ENCODE measurements at regions of chr1 and their contacts with region 1.

Region 1: DNA sequence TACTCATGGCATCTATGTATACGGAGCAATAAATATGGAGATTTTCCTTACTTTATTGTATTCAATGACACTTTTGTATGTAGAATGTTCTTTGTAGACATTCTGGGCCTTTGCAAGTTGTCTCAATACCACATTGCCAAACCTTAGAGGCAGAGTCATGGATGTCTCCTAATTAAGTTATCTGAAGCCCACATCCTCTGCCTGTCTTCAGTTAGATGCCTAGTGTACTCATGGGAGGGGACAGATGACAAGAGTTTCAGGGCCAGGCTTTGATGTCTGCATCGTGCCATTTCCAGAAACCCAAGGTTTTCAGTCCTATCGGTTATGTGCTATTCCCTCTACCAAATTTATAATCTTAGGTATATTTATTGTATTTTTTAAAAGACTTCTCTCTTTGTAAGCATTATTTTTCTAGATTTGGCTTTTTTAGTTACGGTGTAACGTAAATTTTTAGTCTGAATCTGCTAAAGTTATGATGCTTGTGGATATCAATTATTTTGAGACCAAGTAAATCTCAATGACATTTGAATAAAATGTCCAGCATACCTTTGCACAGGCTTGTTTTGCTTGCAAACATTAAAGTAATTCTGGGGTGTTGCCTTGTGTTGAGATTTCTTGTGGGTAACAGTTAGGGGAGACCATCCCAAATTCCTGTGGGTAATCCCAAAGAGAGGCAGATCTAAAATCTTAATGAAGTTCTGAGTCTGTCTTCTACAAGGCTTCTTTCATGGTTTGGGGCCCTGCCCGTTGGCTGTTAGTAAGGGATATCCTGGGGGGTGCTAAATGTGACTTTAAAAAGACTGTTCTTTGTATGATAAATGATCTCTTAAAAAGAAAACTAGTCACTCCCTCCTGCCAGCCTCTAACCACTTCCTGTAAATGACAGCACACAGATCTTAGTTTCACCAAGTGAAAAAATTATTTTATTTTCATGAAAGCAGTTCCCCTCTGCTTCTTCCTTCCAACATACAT is 8.0 kb upstream of the MACF1 start:
- DNase-seq: peak in 7 of 9 donors; percentile 73 to 90 (median 89)
- ATAC-seq: peak; percentile 89
- H3K4me3 ChIP-seq: peak overlapping the region; percentile 62
- H3K4me3 Mint-ChIP-seq: peak overlapping the region; percentile 48 to 88 (median 76)
- H3K27ac ChIP-seq: peak overlapping the region; percentile 78
- H3K27ac Mint-ChIP-seq: peak overlapping the region; percentile 86 to 97 (median 95)
- H3K4me1 ChIP-seq: peaks cover 53 to 58% of the 10 kb centered on the region in 2 donors
- H3K4me1 Mint-ChIP-seq: peaks cover 67 to 91% (median 80%) of the 10 kb centered on the region in 7 donors
- H3K27me3 ChIP-seq: no peaks in the 10 kb centered on the region
- H3K27me3 Mint-ChIP-seq: no peaks in the 10 kb centered on the region

Region 2: GRCh38 chr1:38141483-38141882 is 1055.0 kb before region 1 on chr1:
- CTCF ChIA-PET with region 1: no interaction called
- POLR2A ChIA-PET with region 1: no interaction called
- intact Hi-C with region 1: no loop called
- DNase-seq: no peak
- ATAC-seq: no peak
- H3K4me3 ChIP-seq: no peak overlapping the region
- H3K4me3 Mint-ChIP-seq: no peak overlapping the region
- H3K27ac ChIP-seq: no peak overlapping the region
- H3K27ac Mint-ChIP-seq: no peak overlapping the region
- H3K4me1 ChIP-seq: no peaks in the 10 kb centered on the region
- H3K4me1 Mint-ChIP-seq: no peaks in the 10 kb centered on the region
- H3K27me3 ChIP-seq: no peaks in the 10 kb centered on the region
- H3K27me3 Mint-ChIP-seq: peaks cover 59 to 89% (median 61%) of the 10 kb centered on the region in 5 donors

Region 3: GRCh38 chr1:38671221-38671620 is 525.3 kb before region 1 on chr1:
- CTCF ChIA-PET with region 1: no interaction called
- POLR2A ChIA-PET with region 1: no interaction called
- intact Hi-C with region 1: no loop called
- DNase-seq: no peak
- ATAC-seq: no peak
- H3K4me3 ChIP-seq: no peak overlapping the region
- H3K4me3 Mint-ChIP-seq: no peak overlapping the region
- H3K27ac ChIP-seq: no peak overlapping the region
- H3K27ac Mint-ChIP-seq: no peak overlapping the region
- H3K4me1 ChIP-seq: no peaks in the 10 kb centered on the region
- H3K4me1 Mint-ChIP-seq: no peaks in the 10 kb centered on the region
- H3K27me3 ChIP-seq: no peaks in the 10 kb centered on the region
- H3K27me3 Mint-ChIP-seq: peaks cover 20 to 52% (median 25%) of the 10 kb centered on the region in 5 donors

Region 4: DNA sequence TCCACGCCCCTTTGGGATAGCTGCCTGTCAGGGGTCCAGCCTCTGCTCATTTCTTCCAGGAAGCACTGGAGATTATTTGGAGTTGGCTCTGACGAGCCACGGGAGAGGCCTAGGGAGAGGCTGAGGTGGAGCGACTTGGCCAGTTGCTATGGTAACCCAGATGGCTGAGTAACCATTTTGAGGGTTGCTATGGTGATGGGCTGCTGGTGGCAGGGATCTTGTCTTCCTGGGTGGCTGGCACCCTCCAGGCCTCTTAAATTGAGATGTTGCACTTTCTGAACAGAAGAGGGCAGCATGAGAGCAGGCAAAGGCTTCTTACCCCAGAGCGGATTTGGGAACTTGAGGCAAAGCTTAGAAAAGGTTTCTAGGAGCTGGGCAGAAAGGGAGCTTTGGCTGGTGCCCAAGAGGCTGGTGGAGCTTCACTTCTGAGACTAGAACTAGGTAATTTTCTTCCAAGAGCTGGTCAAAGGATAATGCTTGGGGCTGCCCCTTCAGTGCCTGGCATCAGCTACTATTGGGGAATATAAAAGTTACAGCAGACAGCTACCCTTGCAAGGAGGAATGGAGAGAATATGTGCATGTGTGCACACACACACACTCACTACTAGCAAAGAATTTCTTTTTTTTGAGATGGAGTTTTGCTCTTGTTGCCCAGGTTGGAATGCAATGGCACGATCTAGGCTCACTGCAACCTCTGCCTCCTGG is 97.8 kb before region 1 on chr1:
- CTCF ChIA-PET with region 1: interaction called, 39 read pairs
- POLR2A ChIA-PET with region 1: interaction called, 5 read pairs
- intact Hi-C with region 1: loop called (anchors 1 kb)
- DNase-seq: peak in 8 of 9 donors; percentile 42 to 75 (median 69)
- ATAC-seq: peak; percentile 89
- H3K4me3 ChIP-seq: no peak overlapping the region
- H3K4me3 Mint-ChIP-seq: no peak overlapping the region
- H3K27ac ChIP-seq: no peak overlapping the region
- H3K27ac Mint-ChIP-seq: peak overlapping the region in 5 of 9 donors; percentile 5 to 65 (median 9)
- H3K4me1 ChIP-seq: peaks cover 3 to 10% of the 10 kb centered on the region in 2 donors
- H3K4me1 Mint-ChIP-seq: peaks cover 22 to 24% (median 23%) of the 10 kb centered on the region in 7 donors
- H3K27me3 ChIP-seq: no peaks in the 10 kb centered on the region
- H3K27me3 Mint-ChIP-seq: peaks cover 0 to 3% (median 0%) of the 10 kb centered on the region in 5 donors

Region 5: GRCh38 chr1:39183503-39184353 is 12.8 kb before region 1 on chr1:
- CTCF ChIA-PET with region 1: interaction called, 34 read pairs
- POLR2A ChIA-PET with region 1: interaction called, 16 read pairs
- intact Hi-C with region 1: loop called (anchors 1 kb)
- DNase-seq: peak; percentile 38 to 94 (median 87)
- ATAC-seq: peak; percentile 97
- H3K4me3 ChIP-seq: no peak overlapping the region
- H3K4me3 Mint-ChIP-seq: peak overlapping the region in 8 of 10 donors; percentile 8 to 51 (median 39)
- H3K27ac ChIP-seq: peak overlapping the region; percentile 76
- H3K27ac Mint-ChIP-seq: peak overlapping the region; percentile 88 to 98 (median 97)
- H3K4me1 ChIP-seq: peaks cover 7 to 16% of the 10 kb centered on the region in 2 donors
- H3K4me1 Mint-ChIP-seq: peaks cover 19 to 50% (median 35%) of the 10 kb centered on the region in 7 donors
- H3K27me3 ChIP-seq: no peaks in the 10 kb centered on the region
- H3K27me3 Mint-ChIP-seq: no peaks in the 10 kb centered on the region

Region 6: GRCh38 chr1:39230261-39231190 is 34.0 kb after region 1 on chr1:
- CTCF ChIA-PET with region 1: interaction called, 36 read pairs
- POLR2A ChIA-PET with region 1: interaction called, 4 read pairs
- intact Hi-C with region 1: loop called (anchors 1 kb)
- DNase-seq: peak in 4 of 9 donors; percentile 7 to 31 (median 14)
- ATAC-seq: peak; percentile 88
- H3K4me3 ChIP-seq: no peak overlapping the region
- H3K4me3 Mint-ChIP-seq: peak overlapping the region; percentile 24 to 73 (median 62)
- H3K27ac ChIP-seq: peak overlapping the region; percentile 52
- H3K27ac Mint-ChIP-seq: peak overlapping the region; percentile 64 to 89 (median 86)
- H3K4me1 ChIP-seq: peaks cover 41 to 46% of the 10 kb centered on the region in 2 donors
- H3K4me1 Mint-ChIP-seq: peaks cover 40 to 70% (median 64%) of the 10 kb centered on the region in 7 donors
- H3K27me3 ChIP-seq: no peaks in the 10 kb centered on the region
- H3K27me3 Mint-ChIP-seq: no peaks in the 10 kb centered on the region

Region 7: DNA sequence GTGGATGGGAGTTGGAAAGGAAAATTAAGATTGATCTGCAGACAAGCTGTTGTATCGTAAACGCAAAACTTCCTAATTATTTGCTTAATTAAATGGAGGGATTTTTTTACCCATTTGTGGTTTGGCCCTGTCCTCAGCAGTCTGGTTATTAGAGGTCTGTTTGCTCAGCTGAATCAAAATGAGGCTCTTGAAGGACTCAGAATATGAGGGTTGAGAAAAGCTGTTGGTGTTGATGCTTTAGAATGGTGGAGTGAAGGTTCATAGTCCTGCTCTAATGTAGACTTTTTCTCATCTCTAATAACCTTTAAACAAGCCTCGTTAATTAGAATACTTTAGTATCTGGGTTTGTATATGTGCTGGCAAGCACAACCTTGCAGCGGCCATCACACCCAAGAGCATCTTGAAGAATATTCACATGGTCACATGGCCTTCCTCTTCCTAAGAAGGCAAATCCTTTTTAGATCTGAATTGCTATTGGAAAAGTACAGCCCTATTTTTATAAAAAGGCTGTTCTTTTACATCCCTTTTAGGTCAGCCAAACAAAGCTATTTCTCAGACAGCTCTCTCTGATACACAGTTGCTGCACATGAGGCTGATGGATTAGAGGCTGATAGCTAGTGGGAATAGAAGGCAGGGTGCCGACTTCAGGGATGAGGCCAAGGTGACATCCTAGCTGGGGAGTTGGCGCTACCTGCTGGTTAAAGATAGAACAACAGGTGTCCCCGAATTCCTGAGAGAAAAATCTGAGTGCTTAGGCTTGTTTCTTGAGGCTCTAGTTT is 61.8 kb after region 1 on chr1:
- CTCF ChIA-PET with region 1: interaction called, 298 read pairs
- POLR2A ChIA-PET with region 1: interaction called, 25 read pairs
- intact Hi-C with region 1: loop called (anchors 1 kb)
- DNase-seq: peak; percentile 41 to 73 (median 54)
- ATAC-seq: peak; percentile 84
- H3K4me3 ChIP-seq: no peak overlapping the region
- H3K4me3 Mint-ChIP-seq: peak overlapping the region in 1 of 10 donors; percentile 46
- H3K27ac ChIP-seq: peak overlapping the region; percentile 11
- H3K27ac Mint-ChIP-seq: peak overlapping the region in 7 of 9 donors; percentile 11 to 68 (median 53)
- H3K4me1 ChIP-seq: peaks cover 17 to 25% of the 10 kb centered on the region in 2 donors
- H3K4me1 Mint-ChIP-seq: peaks cover 21 to 52% (median 35%) of the 10 kb centered on the region in 7 donors
- H3K27me3 ChIP-seq: no peaks in the 10 kb centered on the region
- H3K27me3 Mint-ChIP-seq: no peaks in the 10 kb centered on the region

Region 8: DNA sequence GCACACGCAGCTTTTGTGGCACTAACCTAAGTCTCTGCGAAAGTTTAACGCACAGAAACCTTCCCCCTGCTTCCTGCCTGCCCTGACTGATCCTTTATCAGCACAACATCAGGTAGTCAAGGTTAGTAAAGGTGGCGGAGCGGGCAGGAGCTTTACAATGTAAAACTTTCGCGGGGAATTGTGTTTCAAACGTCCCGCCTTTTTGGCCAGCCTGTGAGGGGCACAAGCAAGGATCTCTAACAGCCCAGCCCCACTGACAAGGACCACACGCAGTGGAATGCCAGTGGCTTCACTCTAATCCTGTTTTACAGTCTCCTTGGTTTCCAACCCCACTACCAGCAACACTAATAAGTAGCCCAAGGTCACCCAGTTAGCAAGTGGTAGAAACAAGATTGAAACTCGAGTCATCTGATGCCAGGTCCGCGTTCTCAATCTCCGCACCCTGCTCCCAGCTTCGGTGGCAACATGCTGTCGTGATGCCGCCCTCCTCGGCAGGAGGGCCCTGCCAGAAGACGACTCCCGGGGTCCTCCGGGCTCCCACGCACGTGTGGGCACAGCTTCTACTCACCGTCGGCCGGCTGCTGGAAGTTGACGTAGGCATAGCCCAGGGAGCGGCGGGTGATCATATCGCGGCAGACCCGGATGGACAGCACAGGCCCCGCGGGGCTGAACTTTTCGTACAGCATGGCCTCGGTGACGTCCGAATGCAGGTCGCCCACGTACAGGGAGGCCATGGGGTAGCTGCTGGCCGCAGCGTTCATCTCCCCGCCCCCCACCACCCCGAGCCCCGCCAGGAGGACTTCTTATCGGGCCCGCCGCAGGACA is 378.9 kb after region 1 on chr1:
- CTCF ChIA-PET with region 1: no interaction called
- POLR2A ChIA-PET with region 1: no interaction called
- intact Hi-C with region 1: loop called in 1 of 2 experiments (anchors 10 kb)
- DNase-seq: peak; percentile 25 to 72 (median 57)
- ATAC-seq: peak; percentile 45
- H3K4me3 ChIP-seq: peak overlapping the region; percentile 68
- H3K4me3 Mint-ChIP-seq: peak overlapping the region; percentile 86 to 98 (median 91)
- H3K27ac ChIP-seq: peak overlapping the region; percentile 89
- H3K27ac Mint-ChIP-seq: peak overlapping the region; percentile 79 to 96 (median 93)
- H3K4me1 ChIP-seq: peaks cover 18 to 26% of the 10 kb centered on the region in 2 donors
- H3K4me1 Mint-ChIP-seq: peaks cover 19 to 52% (median 49%) of the 10 kb centered on the region in 7 donors
- H3K27me3 ChIP-seq: no peaks in the 10 kb centered on the region
- H3K27me3 Mint-ChIP-seq: no peaks in the 10 kb centered on the region

Measured in naive thymus-derived CD4-positive, alpha-beta T cell (primary cell).